ENCODE measurements at regions of chr17 and their contacts with region 1.

Region 1: GRCh38 chr17:5438716-5439445 is at the start of gene C1QBP:
- DNase-seq: peak; percentile 96
- ATAC-seq: peak; percentile 91
- H3K4me3 Mint-ChIP-seq: peak within 1 kb of the TSS; percentile 88
- H3K27ac Mint-ChIP-seq: peak within 1 kb of the TSS; percentile 89
- H3K4me1 Mint-ChIP-seq: peaks cover 20% of the 10 kb centered on the region
- H3K27me3 Mint-ChIP-seq: no peaks in the 10 kb centered on the region
- CTCF ChIP-seq: peak; percentile 90
- total RNA-seq, gene C1QBP: 377 to 429 TPM (median 382 TPM) in 3 replicates

Region 2: GRCh38 chr17:5331506-5331905 is 107.4 kb before region 1 on chr17:
- CTCF ChIA-PET with region 1: no interaction called
- POLR2A ChIA-PET with region 1: no interaction called
- DNase-seq: no peak
- ATAC-seq: no peak
- H3K4me3 Mint-ChIP-seq: no peak overlapping the region
- H3K27ac Mint-ChIP-seq: no peak overlapping the region
- H3K4me1 Mint-ChIP-seq: no peaks in the 10 kb centered on the region
- H3K27me3 Mint-ChIP-seq: no peaks in the 10 kb centered on the region
- CTCF ChIP-seq: no peak

Region 3: GRCh38 chr17:5419356-5419958 is 19.4 kb before region 1 on chr17 and contains the start of gene NUP88:
- CTCF ChIA-PET with region 1: interaction called, 26 read pairs
- POLR2A ChIA-PET with region 1: interaction called, 10 read pairs
- DNase-seq: peak; percentile 97
- ATAC-seq: peak; percentile 98
- H3K4me3 Mint-ChIP-seq: peak within 1 kb of the TSS; percentile 100
- H3K27ac Mint-ChIP-seq: peak within 1 kb of the TSS; percentile 99
- H3K4me1 Mint-ChIP-seq: peaks cover 11% of the 10 kb centered on the region
- H3K27me3 Mint-ChIP-seq: no peaks in the 10 kb centered on the region
- CTCF ChIP-seq: no peak
- total RNA-seq, gene NUP88: 63.0 to 87.7 TPM (median 65.4 TPM) in 3 replicates

Region 4: GRCh38 chr17:5486204-5487124 is 47.6 kb after region 1 on chr17 and contains the start of gene MIS12:
- CTCF ChIA-PET with region 1: interaction called, 15 read pairs
- POLR2A ChIA-PET with region 1: no interaction called
- DNase-seq: peak; percentile 97
- ATAC-seq: peak; percentile 95
- H3K4me3 Mint-ChIP-seq: peak within 1 kb of the TSS; percentile 100
- H3K27ac Mint-ChIP-seq: peak within 1 kb of the TSS; percentile 100
- H3K4me1 Mint-ChIP-seq: peaks cover 26% of the 10 kb centered on the region
- H3K27me3 Mint-ChIP-seq: no peaks in the 10 kb centered on the region
- CTCF ChIP-seq: no peak
- total RNA-seq, gene MIS12: 22.6 to 25.5 TPM (median 24.8 TPM) in 3 replicates

Region 5: DNA sequence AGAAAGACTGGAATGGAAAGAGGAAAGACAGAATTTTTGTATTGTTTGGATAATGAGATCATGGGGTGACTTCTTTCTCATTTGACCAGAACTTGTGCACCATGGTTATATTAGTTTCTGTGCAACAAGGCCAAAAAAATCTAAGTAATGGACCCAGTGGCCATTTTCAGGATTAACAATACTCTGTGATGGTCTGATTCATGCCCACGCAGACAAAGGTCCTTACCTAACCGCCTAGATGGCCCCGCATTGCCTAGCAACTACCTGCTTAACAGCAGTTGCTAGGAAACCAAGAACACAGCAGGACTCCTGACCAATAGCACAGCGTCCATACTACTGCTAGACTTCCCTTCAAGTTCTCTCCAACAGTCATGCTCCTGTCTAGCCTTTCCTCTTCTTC is 69.9 kb after region 1 on chr17:
- CTCF ChIA-PET with region 1: no interaction called
- POLR2A ChIA-PET with region 1: no interaction called
- DNase-seq: peak; percentile 41
- ATAC-seq: peak; percentile 74
- H3K4me3 Mint-ChIP-seq: no peak overlapping the region
- H3K27ac Mint-ChIP-seq: no peak overlapping the region
- H3K4me1 Mint-ChIP-seq: peaks cover 7% of the 10 kb centered on the region
- H3K27me3 Mint-ChIP-seq: peaks cover 6% of the 10 kb centered on the region
- CTCF ChIP-seq: no peak